PC-9 (cell line): ENCODE measurements at regions of chr15 and their contacts with region 1.

Region 1: DNA sequence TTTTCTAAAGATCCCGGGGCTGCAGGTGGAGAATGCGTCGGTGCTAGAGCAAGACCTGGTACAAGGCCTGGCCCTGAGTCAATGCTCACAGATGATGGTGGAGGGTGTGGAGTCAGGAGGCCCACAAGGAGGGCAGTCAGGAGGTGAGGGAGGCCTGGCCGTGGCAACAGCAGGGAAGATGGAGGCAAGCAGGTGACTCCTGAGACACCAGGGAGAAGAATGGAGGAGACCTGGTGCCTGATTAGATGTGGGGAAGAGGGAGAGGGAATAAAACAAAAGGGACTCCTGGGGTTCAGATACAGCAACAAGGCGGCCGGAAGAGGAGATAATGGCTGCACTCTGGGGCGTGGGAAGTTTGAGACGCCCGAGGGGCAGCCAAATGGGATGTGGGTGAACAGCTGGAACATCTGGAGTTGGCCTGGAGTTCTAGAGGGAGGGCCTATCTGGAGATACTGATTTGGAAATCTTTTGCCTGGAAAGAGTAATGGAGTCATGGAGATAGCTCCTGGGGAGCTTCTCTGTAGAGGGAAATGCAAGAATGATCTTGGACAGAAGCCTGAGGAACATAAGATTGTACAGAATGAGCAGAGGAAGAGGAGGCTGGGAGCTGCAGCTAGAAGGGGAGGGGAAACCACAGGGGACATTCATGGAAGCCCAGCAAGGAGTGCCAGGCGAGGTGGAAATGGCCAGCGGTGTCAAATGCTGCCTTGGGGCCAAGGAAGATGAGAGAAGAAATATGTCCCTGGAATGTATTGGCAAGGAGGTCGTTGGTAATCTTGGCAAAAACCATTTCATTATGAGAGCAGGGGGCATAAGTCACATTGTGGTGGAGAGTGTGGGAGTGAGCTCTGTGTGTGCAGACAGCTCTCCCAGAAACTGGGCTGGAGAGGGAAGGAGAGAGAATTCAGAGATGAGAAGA is 67.5 kb upstream of the CORO2B start:
- DNase-seq: peak in 1 of 2 experiments; percentile 30
- H3K4me3 ChIP-seq: no peak overlapping the region
- H3K27ac ChIP-seq: no peak overlapping the region
- H3K4me1 ChIP-seq: no peaks in the 10 kb centered on the region
- H3K27me3 ChIP-seq: peaks cover 9% of the 10 kb centered on the region
- CTCF ChIP-seq: no peak

Region 2: DNA sequence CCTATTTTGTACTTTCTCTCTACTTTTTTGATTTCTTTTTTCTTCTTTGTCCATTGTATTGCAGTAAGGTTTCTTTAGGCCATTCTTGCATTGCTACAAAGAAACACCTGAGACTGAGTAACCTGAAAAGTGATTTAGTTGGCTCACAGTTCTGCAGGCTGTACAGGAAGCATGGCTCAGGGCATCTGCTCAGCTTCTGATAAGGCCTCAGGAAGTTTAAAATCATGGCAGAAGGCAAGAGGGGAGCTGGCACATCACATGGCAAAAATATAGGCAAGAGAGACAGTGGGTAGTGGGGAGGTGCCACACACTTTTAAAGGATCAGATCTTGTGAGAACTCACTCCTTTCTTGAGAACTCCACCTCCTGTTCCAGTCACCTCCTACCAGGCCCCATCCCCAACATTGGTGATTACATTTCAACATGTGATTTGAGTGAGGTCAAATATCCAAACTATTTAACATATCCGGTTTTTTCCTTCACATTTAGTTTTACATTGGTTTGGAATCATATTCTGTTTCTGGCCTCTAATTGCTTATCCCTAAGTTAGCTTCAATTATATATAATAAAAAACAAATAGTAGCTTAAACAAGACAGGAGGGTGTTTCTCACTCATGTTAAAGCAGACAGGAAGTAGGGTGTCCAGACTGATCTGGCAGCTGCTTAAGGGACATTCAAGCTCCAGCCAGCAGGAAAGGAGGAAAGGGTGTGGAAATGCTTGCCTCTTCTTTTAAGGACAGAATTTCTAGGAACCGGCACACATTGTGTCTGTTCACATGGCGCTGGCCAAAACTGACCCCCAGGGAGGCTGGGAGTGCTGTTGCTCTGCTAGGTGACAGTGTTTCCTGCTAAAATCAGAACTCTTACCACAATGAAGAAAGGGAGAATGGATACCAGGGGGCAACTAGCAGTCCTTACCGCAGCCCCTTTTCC is 714.9 kb before region 1 on chr15:
- CTCF ChIA-PET with region 1: no interaction called
- POLR2A ChIA-PET with region 1: no interaction called
- intact Hi-C with region 1: no loop called
- DNase-seq: no peak
- H3K4me3 ChIP-seq: no peak overlapping the region
- H3K27ac ChIP-seq: no peak overlapping the region
- H3K4me1 ChIP-seq: no peaks in the 10 kb centered on the region
- H3K27me3 ChIP-seq: no peaks in the 10 kb centered on the region
- CTCF ChIP-seq: no peak

Region 3: DNA sequence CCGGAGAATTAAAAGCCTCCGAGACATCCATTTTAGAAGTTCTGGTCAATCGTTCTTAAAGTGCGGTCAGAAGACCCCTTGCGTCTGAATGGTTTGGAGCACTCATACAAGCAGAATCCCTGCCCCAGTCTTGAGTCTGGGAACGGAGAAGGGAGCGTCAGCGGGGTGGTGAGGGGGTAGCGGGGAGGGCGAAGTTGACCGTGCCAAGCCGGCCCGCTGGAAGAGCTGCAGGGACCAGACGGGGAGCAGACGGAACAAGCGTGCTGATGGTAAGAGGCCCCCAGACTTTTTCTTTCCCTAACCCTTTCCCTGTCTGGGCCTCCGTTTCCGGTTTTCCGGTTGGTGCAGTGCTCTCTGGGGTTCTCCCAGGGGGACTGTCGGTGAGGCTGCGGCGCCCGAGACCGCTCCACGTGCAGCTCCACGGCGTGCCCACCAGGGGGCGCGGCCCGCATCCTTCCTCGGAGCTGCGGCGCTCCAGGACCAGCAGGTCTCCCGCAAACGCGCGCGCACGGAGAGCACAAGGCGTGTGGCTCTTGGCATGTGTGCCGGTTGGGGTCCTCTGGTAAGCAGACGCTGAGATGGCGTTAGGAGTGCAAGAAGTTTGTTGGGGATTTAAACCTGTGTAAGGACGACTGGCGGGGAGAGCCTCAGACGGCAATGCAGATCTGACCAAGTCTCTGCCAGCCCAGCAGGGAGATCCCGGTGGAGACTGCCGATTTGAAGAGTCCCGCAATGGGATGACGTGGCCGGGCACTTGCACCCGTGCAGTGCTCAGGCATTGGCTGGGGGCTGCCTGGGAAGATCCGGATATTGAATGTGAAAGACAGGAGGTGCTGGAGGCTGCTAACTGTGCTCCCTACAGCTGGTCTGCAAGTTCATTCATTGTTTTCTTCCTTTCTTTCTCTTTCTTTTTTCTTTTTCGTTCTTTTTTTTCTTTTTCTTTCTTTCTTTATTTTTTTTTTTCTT is 48.3 kb after region 1 on chr15:
- CTCF ChIA-PET with region 1: no interaction called
- POLR2A ChIA-PET with region 1: no interaction called
- intact Hi-C with region 1: no loop called
- DNase-seq: peak in 1 of 2 experiments; percentile 80
- H3K4me3 ChIP-seq: peak overlapping the region; percentile 47; the same call in 1 of the 2 replicates
- H3K27ac ChIP-seq: no peak overlapping the region
- H3K4me1 ChIP-seq: no peaks in the 10 kb centered on the region
- H3K27me3 ChIP-seq: no peaks in the 10 kb centered on the region
- CTCF ChIP-seq: peak; percentile 90

Region 4: DNA sequence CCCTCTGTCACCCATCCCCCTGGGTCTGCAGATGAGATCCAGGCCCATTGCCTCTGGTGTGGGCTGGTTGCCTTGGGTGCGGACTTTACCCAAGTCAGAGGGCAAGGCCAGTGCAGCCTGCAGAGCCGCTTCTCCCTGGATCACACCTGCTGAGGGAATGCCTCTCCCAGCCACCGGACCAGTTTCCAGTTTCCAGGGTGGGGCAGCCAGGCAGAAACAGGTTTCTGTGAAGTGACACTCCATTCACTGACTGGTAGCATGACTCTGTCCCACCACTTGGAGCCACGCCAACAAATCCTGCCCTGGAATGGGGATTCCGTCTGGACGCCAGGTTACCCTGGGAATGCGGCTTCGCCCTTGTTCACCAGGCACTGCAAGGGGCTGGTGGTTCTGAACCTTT is 817.4 kb after region 1 on chr15:
- CTCF ChIA-PET with region 1: interaction called, 12 read pairs
- POLR2A ChIA-PET with region 1: no interaction called
- intact Hi-C with region 1: no loop called
- DNase-seq: peak; percentile 76 to 87
- H3K4me3 ChIP-seq: no peak overlapping the region
- H3K27ac ChIP-seq: peak overlapping the region; percentile 55
- H3K4me1 ChIP-seq: peaks cover 14% of the 10 kb centered on the region
- H3K27me3 ChIP-seq: no peaks in the 10 kb centered on the region
- CTCF ChIP-seq: no peak